ENCODE measurements at regions of chr12 and their contacts with region 1.

Region 1: DNA sequence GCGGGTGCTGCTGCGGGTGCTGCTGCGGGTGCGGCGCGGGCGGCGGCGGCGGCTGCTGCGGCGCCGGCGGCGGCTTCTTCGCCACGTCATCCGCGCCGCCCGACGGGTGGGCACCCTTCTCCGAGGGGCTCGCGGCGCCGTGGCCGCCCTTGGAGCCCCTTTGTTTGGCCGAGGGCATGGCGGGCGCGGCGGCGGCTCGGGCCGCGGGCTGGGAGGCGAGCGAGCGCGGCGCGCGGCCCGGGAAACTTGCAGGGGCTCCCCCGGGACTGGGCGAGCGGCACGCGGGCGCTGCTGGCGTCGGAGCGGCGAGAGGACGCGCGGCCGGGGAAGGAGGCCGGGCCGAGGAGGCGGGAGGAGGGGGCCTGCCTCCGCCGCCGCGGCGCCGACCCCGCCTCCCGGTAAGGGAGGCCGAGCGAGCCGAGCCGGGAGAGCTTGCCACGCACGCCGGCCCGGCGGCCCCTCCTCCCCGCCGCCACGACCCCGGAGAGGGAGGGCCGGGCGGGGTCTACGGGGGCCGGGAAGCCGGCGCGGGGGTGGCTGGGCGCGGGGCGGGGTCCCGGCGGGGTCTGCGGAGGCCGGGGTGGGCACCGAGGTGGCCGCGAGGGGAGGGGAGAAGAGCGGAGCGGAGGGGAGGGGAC is at the start of gene CKAP4:
- DNase-seq: peak; percentile 73
- ATAC-seq: peak; percentile 71
- H3K4me3 Mint-ChIP-seq: peak within 1 kb of the TSS; percentile 82
- H3K27ac Mint-ChIP-seq: peak within 1 kb of the TSS; percentile 80
- H3K4me1 Mint-ChIP-seq: peaks cover 54% of the 10 kb centered on the region
- H3K27me3 Mint-ChIP-seq: no peaks in the 10 kb centered on the region
- CTCF ChIP-seq: no peak
- total RNA-seq, gene CKAP4: 15.9 and 17.1 TPM in 2 replicates

Region 2: DNA sequence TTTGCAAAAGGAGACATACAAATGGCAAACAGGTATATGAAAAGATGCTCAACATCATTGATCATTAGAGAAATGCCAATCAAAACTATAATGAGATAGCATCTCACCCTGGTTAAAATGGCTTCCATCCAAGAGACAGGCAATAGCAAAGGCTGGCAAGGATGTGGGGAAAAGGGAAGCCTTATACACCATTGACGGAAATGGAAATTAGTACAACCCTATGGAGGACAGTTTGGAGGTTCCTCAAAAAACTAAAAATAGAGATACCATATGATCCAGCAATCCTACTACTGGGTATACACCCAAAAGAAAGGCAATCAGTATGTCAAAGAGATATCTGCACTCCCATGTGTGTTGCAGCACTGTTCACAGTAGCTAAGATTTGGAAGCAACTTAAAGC is 17.3 kb after region 1 on chr12:
- CTCF ChIA-PET with region 1: no interaction called
- POLR2A ChIA-PET with region 1: no interaction called
- intact Hi-C with region 1: loop called (anchors 2 kb)
- DNase-seq: no peak
- ATAC-seq: no peak
- H3K4me3 Mint-ChIP-seq: no peak overlapping the region
- H3K27ac Mint-ChIP-seq: no peak overlapping the region
- H3K4me1 Mint-ChIP-seq: peaks cover 2% of the 10 kb centered on the region
- H3K27me3 Mint-ChIP-seq: no peaks in the 10 kb centered on the region
- CTCF ChIP-seq: no peak

Region 3: DNA sequence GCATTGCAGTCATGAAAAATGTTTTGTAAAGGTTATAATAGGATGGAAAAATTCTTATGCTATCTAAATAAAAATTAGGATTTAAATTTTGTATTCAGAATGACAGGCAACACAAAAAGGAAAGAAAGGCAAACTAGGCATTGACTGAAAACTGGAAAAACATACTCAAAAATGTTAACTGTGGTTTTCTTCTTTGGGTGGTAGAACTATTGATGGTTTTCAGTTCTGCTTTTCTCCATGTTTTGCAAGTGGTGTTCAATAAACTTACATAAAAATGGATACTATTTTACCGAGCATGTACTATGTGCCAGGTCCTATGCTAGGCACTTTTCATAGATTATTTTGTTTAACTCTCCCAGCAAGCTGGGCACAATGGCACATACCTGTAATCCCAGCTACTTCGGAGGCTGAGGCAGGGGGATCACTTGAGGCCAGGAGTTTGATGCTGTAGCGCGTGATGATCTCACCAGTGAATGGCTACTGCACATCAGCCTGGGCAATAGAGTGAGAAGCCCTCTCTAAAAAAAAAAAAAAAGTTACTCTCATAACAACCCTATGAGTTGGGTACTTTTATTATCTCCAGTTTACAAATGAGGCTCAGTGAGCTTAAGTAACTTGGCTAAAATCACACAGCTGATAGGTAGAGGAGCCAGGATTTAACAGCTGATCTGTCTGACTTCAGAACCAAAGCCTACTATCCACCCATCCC is 28.4 kb after region 1 on chr12:
- CTCF ChIA-PET with region 1: interaction called, 3 read pairs
- POLR2A ChIA-PET with region 1: interaction called, 22 read pairs
- intact Hi-C with region 1: loop called (anchors 1 kb)
- DNase-seq: peak; percentile 29
- ATAC-seq: peak; percentile 92
- H3K4me3 Mint-ChIP-seq: peak overlapping the region; percentile 73
- H3K27ac Mint-ChIP-seq: peak overlapping the region; percentile 89
- H3K4me1 Mint-ChIP-seq: peaks cover 41% of the 10 kb centered on the region
- H3K27me3 Mint-ChIP-seq: peaks cover 3% of the 10 kb centered on the region
- CTCF ChIP-seq: no peak

Region 4: GRCh38 chr12:106282457-106283097 is 34.8 kb after region 1 on chr12:
- CTCF ChIA-PET with region 1: interaction called, 12 read pairs
- POLR2A ChIA-PET with region 1: interaction called, 7 read pairs
- intact Hi-C with region 1: loop called (anchors 1 kb)
- DNase-seq: no peak
- ATAC-seq: peak; percentile 84
- H3K4me3 Mint-ChIP-seq: no peak overlapping the region
- H3K27ac Mint-ChIP-seq: no peak overlapping the region
- H3K4me1 Mint-ChIP-seq: peaks cover 29% of the 10 kb centered on the region
- H3K27me3 Mint-ChIP-seq: peaks cover 5% of the 10 kb centered on the region
- CTCF ChIP-seq: peak; percentile 76

Region 5: GRCh38 chr12:106357549-106358395 is 110.0 kb after region 1 on chr12 and contains the start of gene POLR3B:
- CTCF ChIA-PET with region 1: no interaction called
- POLR2A ChIA-PET with region 1: interaction called, 3 read pairs
- intact Hi-C with region 1: loop called (anchors 1 kb)
- DNase-seq: peak; percentile 96
- ATAC-seq: peak; percentile 92
- H3K4me3 Mint-ChIP-seq: peak within 1 kb of the TSS; percentile 95
- H3K27ac Mint-ChIP-seq: peak within 1 kb of the TSS; percentile 92
- H3K4me1 Mint-ChIP-seq: peaks cover 16% of the 10 kb centered on the region
- H3K27me3 Mint-ChIP-seq: no peaks in the 10 kb centered on the region
- CTCF ChIP-seq: peak; percentile 49
- total RNA-seq, gene POLR3B: 7.3 and 8.0 TPM in 2 replicates

Region 6: GRCh38 chr12:106955377-106956047 is 707.7 kb after region 1 on chr12 and contains the start of gene TMEM263:
- CTCF ChIA-PET with region 1: no interaction called
- POLR2A ChIA-PET with region 1: no interaction called
- intact Hi-C with region 1: loop called (anchors 5 kb)
- DNase-seq: peak; percentile 91
- ATAC-seq: peak; percentile 86
- H3K4me3 Mint-ChIP-seq: peak within 1 kb of the TSS; percentile 96
- H3K27ac Mint-ChIP-seq: peak within 1 kb of the TSS; percentile 84
- H3K4me1 Mint-ChIP-seq: peaks cover 23% of the 10 kb centered on the region
- H3K27me3 Mint-ChIP-seq: no peaks in the 10 kb centered on the region
- CTCF ChIP-seq: no peak
- total RNA-seq, gene TMEM263: 10.5 and 15.1 TPM in 2 replicates

Region 7: GRCh38 chr12:107685360-107686248 is 1437.8 kb after region 1 on chr12 and contains the start of gene PWP1:
- CTCF ChIA-PET with region 1: no interaction called
- POLR2A ChIA-PET with region 1: no interaction called
- intact Hi-C with region 1: loop called (anchors 10 kb)
- DNase-seq: peak; percentile 93
- ATAC-seq: peak; percentile 90
- H3K4me3 Mint-ChIP-seq: peak within 1 kb of the TSS; percentile 96
- H3K27ac Mint-ChIP-seq: peak within 1 kb of the TSS; percentile 97
- H3K4me1 Mint-ChIP-seq: peaks cover 23% of the 10 kb centered on the region
- H3K27me3 Mint-ChIP-seq: no peaks in the 10 kb centered on the region
- CTCF ChIP-seq: no peak
- total RNA-seq, gene PWP1: 49.4 and 53.5 TPM in 2 replicates